ENCODE measurements at regions of chr3 and their contacts with region 1.

Region 1: DNA sequence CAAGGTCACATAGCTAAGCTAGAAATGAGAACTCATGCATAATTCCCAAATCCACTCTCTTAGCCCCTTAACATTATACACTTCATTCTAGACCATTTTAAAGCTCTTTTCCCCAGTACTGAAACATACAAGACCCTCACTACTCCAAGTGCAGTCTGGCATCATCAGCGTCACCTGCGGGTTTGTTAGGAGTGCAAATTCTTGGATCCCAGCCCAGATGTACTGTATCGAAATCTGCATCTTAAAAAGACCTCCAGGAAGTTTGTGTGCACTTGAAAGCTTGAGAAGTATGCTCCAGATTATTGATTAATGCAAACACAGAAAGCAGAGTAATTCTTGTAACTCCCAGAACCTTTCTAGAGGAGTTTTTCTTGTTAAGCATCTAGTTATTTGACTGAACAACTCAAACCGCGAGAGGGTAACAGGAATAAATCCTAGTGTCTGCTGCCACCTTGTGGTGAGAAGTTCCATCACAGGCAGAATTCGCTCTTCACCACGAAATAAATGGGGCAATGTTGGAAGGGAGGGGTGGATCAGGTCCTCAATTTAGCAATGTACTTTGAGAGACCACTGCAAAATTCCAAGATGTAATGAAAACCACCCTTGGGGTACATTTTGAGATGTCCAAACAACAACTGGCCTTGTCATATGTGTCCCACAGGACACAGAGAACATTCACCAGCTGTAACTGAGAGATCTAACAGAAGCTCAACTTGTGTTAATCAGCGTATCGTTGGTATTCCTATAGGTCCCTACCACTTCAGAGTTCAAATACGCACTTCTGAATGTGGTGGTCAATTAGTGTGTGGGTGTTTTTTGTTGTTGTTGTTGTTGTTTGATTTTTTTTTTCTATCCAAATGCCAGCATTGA is 583 bp upstream of the C3orf49 start:
- DNase-seq: peak; percentile 61
- H3K4me3 ChIP-seq: no peak overlapping the region
- H3K27ac ChIP-seq: no peak overlapping the region
- H3K4me1 ChIP-seq: no peaks in the 10 kb centered on the region
- H3K27me3 ChIP-seq: no peaks in the 10 kb centered on the region
- CTCF ChIP-seq: peak; percentile 77 to 89 (median 85)
- POLR2A ChIP-seq: no peak

Region 2: DNA sequence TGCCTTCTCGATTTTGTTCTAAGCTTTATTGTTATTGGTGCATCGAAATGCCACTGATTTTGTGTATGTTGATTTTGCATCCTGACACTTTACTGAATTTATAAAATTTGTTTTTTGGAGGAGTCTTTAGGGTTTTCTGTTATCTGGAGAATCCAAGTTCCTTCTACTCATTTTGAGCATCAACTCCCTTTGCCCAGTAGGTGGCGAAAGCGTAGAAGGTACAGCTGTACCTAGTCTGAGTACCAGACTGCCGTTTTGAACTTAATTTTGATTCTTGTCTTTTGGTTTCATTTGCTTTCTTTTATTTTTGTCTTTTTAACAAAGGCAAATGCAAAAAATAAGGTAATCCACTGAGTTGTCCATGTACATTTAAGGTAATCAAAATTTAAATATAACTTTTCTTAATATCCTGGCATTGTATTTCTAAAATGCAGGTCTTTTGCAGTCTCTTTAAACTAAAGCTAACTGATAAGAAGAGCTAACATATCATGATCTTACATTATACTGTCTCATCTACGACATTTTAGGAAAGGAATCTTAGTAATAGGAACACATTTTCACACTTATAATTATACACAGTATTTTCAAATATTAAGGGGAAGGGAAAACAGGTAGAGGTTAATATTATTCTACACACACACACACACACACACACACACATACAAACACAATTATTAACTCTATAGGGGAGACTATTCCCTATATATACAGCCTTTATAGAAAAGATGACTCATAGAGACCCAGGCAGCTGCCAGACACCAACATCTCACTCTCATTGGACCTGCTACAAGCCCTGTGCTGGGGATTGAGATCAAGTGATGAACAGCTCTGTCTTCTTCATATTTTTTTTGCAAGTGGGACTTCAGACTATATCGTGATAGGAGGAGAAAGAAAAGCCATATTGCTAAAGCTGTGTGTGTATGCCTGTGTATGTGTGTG is 468.7 kb before region 1 on chr3:
- intact Hi-C with region 1: loop called (anchors 2 kb)
- DNase-seq: peak; percentile 36
- H3K4me3 ChIP-seq: no peak overlapping the region
- H3K27ac ChIP-seq: no peak overlapping the region
- H3K4me1 ChIP-seq: no peaks in the 10 kb centered on the region
- H3K27me3 ChIP-seq: no peaks in the 10 kb centered on the region
- CTCF ChIP-seq: peak; percentile 26 to 71 (median 54)
- POLR2A ChIP-seq: no peak

Region 3: GRCh38 chr3:64011685-64012084 is 193.2 kb after region 1 on chr3:
- intact Hi-C with region 1: no loop called
- DNase-seq: no peak
- H3K4me3 ChIP-seq: no peak overlapping the region
- H3K27ac ChIP-seq: no peak overlapping the region
- H3K4me1 ChIP-seq: no peaks in the 10 kb centered on the region
- H3K27me3 ChIP-seq: no peaks in the 10 kb centered on the region
- CTCF ChIP-seq: no peak
- POLR2A ChIP-seq: no peak

Measured in prostate gland (tissue), 2 donors.